Left cardiac atrium (tissue), 4 donors: ENCODE measurements at regions of chr15 and their contacts with region 1.

Region 1: GRCh38 chr15:78000091-78000926 is 77.2 kb downstream of the TBC1D2B start:
- DNase-seq: peak; percentile 76
- ATAC-seq: peak; percentile 71 to 75

Region 2: DNA sequence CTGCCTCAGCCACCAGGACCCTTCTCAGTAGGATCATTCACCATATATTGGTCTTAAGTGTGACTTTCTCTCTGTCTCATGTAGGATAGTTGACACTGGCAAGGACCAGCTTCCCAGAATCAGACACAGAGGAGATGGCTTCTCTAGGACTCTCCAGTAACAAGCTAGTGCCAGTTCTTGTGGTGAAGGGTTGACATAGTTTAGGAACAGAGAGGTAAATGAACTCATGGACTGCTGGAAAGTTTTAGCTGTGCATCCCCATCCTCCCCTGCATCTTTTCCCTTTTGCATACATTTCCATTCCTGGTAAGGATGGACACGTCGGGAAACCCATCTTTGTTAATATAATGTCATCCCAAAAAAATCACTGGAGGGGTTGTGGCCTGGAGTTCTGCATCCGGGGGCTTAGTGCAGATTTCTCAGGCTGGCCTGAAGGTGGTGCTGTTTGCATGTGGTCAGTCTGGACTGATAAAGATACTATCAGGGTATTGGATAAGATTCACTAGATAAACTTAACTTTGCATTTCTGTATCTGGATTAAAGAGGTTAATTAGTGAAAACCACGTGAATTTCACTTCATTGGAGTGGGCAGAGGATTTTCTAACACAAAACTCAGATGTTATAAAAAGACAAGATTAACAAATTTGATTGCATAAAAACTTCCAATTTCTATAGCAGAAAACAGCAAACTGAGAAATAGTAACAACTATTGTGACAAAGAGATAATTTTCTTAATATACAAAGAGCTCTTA is 33.6 kb before region 1 on chr15:
- intact Hi-C with region 1: loop called in 1 of 2 experiments (anchors 5 kb)
- DNase-seq: no peak
- ATAC-seq: peak; percentile 80 to 81

Region 3: GRCh38 chr15:78056714-78057269 is 56.5 kb after region 1 on chr15:
- intact Hi-C with region 1: loop called in 1 of 2 experiments (anchors 5 kb)
- DNase-seq: no peak
- ATAC-seq: peak; percentile 63 to 77